Heart right ventricle (tissue), 16 donors: ENCODE measurements at regions of chr11 and their contacts with region 1.

Region 1: DNA sequence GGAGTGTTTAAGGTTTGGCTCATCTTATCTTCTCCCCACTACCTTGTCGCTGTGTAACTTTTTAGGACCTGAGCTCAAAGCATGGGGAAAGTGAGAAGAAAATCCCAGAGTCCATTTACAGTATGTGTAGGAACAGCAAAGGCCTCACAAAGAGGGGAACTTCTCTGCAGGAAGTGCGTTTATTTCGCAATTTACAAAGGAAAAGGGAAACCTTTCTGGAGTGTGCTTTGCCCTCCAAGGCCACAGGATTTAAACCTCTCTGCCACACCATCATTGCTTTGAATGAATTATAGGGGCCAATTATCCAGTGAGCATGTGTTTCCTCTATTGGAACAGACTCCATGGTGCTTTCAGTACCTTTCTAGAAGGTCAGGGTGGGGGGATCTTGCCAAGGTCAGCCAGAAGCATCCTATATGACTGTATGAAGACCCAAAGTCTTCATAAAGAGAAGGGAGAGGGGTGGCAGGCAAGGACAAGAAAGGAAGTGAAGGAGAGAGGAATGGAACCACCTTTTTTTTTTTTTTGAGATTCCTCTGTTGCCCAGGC is 68.1 kb upstream of the LMO2 start:
- DNase-seq: no peak
- ATAC-seq: no peak
- H3K4me3 ChIP-seq: no peak overlapping the region
- H3K27ac ChIP-seq: no peak overlapping the region
- H3K4me1 ChIP-seq: peaks cover 0 to 11% (median 0%) of the 10 kb centered on the region in 9 donors
- H3K27me3 ChIP-seq: no peaks in the 10 kb centered on the region
- CTCF ChIP-seq: no peak

Region 2: GRCh38 chr11:33912405-33913361 is 47.2 kb before region 1 on chr11:
- intact Hi-C with region 1: loop called in 1 of 10 experiments (anchors 5 kb)
- DNase-seq: no peak
- ATAC-seq: peak in 4 of 8 donors; percentile 45 to 75 (median 52)
- H3K4me3 ChIP-seq: no peak overlapping the region
- H3K27ac ChIP-seq: peak overlapping the region in 1 of 10 donors; percentile 73
- H3K4me1 ChIP-seq: peaks cover 0 to 50% (median 3%) of the 10 kb centered on the region in 9 donors
- H3K27me3 ChIP-seq: peaks cover 0 to 5% (median 0%) of the 10 kb centered on the region in 7 donors
- CTCF ChIP-seq: no peak

Region 3: DNA sequence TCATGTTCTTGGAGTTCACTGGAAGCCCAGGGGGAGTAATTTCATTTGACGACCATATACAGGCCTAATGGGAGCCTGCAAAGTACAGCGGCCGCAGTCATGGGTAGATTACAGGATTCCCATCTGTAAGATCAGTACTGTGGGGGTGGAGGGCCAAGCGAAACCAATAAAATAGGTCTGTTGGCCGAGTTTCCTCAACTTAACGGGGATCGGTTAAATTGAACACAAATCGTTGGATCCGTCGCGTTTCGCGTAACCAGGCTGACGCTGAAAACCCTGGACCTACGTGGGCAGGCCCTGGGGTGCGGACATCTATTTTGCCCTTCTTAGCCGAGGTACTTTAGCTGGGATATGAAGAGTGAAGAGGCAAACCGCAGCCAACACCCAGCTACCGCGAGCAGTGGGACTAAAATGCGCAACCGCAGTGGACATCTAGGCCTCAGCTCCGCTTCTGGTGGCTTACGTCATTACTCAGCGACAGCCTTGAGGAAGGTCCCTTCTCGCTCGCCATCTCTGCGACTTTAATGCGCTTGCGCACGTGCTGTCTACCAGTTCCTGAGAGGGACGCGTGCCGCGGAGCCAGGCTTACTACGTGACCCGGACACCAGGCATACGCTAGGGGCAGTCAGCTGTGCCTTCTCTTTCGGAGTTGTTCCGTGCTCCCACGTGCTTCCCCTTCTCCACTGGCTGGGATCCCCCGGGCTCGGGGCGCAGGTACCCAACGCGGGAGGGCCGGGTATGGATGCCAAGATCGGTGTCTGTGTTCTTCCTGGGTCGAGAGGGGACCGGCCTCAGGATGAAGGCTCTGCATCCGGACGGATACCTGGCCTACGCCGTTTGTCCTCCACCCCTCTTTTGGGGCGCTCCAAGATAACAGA is 145.4 kb after region 1 on chr11 and contains the start of gene NAT10:
- intact Hi-C with region 1: no loop called
- DNase-seq: peak; percentile 93 to 98
- ATAC-seq: peak; percentile 95 to 99 (median 98)
- H3K4me3 ChIP-seq: peak within 1 kb of the TSS; percentile 61 to 93 (median 80)
- H3K27ac ChIP-seq: peak within 1 kb of the TSS; percentile 58 to 97 (median 94)
- H3K4me1 ChIP-seq: peaks cover 0 to 27% (median 20%) of the 10 kb centered on the region in 9 donors
- H3K27me3 ChIP-seq: no peaks in the 10 kb centered on the region
- CTCF ChIP-seq: peak in 3 of 9 donors; percentile 14 to 33 (median 28)
- total RNA-seq, gene NAT10: 16.6 to 26.4 (median 22.4) TPM